Naive thymus-derived CD4-positive, alpha-beta T cell (primary cell): ENCODE measurements at regions of chr20 and their contacts with region 1.

Region 1: GRCh38 chr20:63980806-63981728 is at the start of gene PRPF6:
- DNase-seq: peak; percentile 89 to 95 (median 92)
- ATAC-seq: peak; percentile 85
- H3K4me3 ChIP-seq: peak within 1 kb of the TSS; percentile 78
- H3K4me3 Mint-ChIP-seq: peak within 1 kb of the TSS; percentile 88 to 97 (median 95)
- H3K27ac ChIP-seq: peak within 1 kb of the TSS; percentile 95
- H3K27ac Mint-ChIP-seq: peak within 1 kb of the TSS; percentile 87 to 99 (median 96)
- H3K4me1 ChIP-seq: peaks cover 34 to 47% of the 10 kb centered on the region in 2 donors
- H3K4me1 Mint-ChIP-seq: peaks cover 53 to 77% (median 65%) of the 10 kb centered on the region in 7 donors
- H3K27me3 ChIP-seq: no peaks in the 10 kb centered on the region
- H3K27me3 Mint-ChIP-seq: no peaks in the 10 kb centered on the region
- total RNA-seq, gene PRPF6: 71.2 to 95.8 (median 82.9) TPM

Region 2: GRCh38 chr20:63635431-63636141 is 345.5 kb before region 1 on chr20:
- CTCF ChIA-PET with region 1: no interaction called
- POLR2A ChIA-PET with region 1: interaction called, 9 read pairs
- intact Hi-C with region 1: loop called in 1 of 2 experiments (anchors 5 kb)
- DNase-seq: peak in 8 of 9 donors; percentile 67 to 92 (median 89)
- ATAC-seq: peak; percentile 81
- H3K4me3 ChIP-seq: peak overlapping the region; percentile 50
- H3K4me3 Mint-ChIP-seq: peak overlapping the region; percentile 77 to 89 (median 82)
- H3K27ac ChIP-seq: peak overlapping the region; percentile 78
- H3K27ac Mint-ChIP-seq: peak overlapping the region; percentile 95 to 100 (median 98)
- H3K4me1 ChIP-seq: peaks cover 58 to 73% of the 10 kb centered on the region in 2 donors
- H3K4me1 Mint-ChIP-seq: peaks cover 24 to 78% (median 53%) of the 10 kb centered on the region in 7 donors
- H3K27me3 ChIP-seq: no peaks in the 10 kb centered on the region
- H3K27me3 Mint-ChIP-seq: no peaks in the 10 kb centered on the region

Region 3: GRCh38 chr20:63894358-63895201 is 86.5 kb before region 1 on chr20 and contains the start of gene DNAJC5:
- CTCF ChIA-PET with region 1: no interaction called
- POLR2A ChIA-PET with region 1: interaction called, 4 read pairs
- intact Hi-C with region 1: loop called in 1 of 2 experiments (anchors 1 kb)
- DNase-seq: peak; percentile 96 to 99 (median 98)
- ATAC-seq: peak; percentile 95
- H3K4me3 ChIP-seq: peak within 1 kb of the TSS; percentile 56
- H3K4me3 Mint-ChIP-seq: peak within 1 kb of the TSS; percentile 86 to 99 (median 96)
- H3K27ac ChIP-seq: peak within 1 kb of the TSS; percentile 94
- H3K27ac Mint-ChIP-seq: peak within 1 kb of the TSS; percentile 94 to 98 (median 97)
- H3K4me1 ChIP-seq: peaks cover 21% of the 10 kb centered on the region in 2 donors
- H3K4me1 Mint-ChIP-seq: peaks cover 34 to 49% (median 43%) of the 10 kb centered on the region in 7 donors
- H3K27me3 ChIP-seq: no peaks in the 10 kb centered on the region
- H3K27me3 Mint-ChIP-seq: peaks cover 0 to 2% (median 0%) of the 10 kb centered on the region in 5 donors
- total RNA-seq, gene DNAJC5: 35.5 to 56.8 (median 50.3) TPM

Region 4: DNA sequence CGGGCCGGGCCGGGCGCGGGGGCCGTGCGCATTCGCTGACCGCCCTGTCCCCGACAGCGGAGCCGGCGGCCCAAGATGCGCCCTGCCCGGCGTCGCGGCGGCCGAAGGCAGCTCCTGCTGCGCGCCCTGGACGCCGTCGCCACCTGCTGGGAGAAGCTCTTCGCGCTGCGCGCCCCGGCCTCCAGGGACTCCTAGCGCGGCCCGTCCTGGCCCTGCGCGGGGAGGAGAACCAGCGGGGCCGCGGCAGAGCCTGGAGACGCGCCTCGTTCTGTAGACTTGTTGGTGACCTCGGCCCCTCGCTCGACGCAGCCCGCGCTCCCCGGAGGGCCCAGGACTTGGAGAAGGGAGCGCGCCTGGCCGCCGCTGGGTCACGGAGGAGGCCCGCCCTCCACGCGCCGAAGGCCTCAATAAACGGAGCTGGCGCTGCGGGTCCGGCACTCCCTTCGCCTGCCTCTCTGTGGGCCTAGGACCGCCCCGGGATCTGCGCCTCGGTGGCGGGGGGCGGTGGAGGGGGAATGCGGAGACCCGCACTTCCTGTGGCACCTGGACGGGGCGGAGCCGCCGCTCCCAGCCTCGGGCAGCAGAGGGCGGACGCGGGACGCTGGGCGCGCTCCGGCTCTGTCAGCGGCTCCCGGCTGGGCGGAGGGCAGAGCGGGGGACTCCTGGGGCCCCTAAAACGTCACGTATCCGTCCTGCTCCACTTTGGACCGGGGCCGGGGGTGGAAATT is 57.7 kb after region 1 on chr20:
- CTCF ChIA-PET with region 1: interaction called, 27 read pairs
- POLR2A ChIA-PET with region 1: interaction called, 37 read pairs
- intact Hi-C with region 1: loop called (anchors 1 kb)
- DNase-seq: peak; percentile 55 to 86 (median 76)
- ATAC-seq: peak; percentile 80
- H3K4me3 ChIP-seq: peak overlapping the region; percentile 62
- H3K4me3 Mint-ChIP-seq: peak overlapping the region; percentile 18 to 89 (median 71)
- H3K27ac ChIP-seq: peak overlapping the region; percentile 57
- H3K27ac Mint-ChIP-seq: peak overlapping the region in 4 of 9 donors; percentile 28 to 92 (median 64)
- H3K4me1 ChIP-seq: peaks cover 40 to 49% of the 10 kb centered on the region in 2 donors
- H3K4me1 Mint-ChIP-seq: peaks cover 26 to 49% (median 33%) of the 10 kb centered on the region in 7 donors
- H3K27me3 ChIP-seq: no peaks in the 10 kb centered on the region
- H3K27me3 Mint-ChIP-seq: no peaks in the 10 kb centered on the region

Region 5: GRCh38 chr20:64079273-64080012 is 98.4 kb after region 1 on chr20 and contains the start of gene RGS19:
- CTCF ChIA-PET with region 1: interaction called, 4 read pairs
- POLR2A ChIA-PET with region 1: interaction called, 5 read pairs
- intact Hi-C with region 1: loop called (anchors 1 kb)
- DNase-seq: peak; percentile 59 to 86 (median 65)
- ATAC-seq: peak; percentile 63
- H3K4me3 ChIP-seq: peak within 1 kb of the TSS; percentile 89
- H3K4me3 Mint-ChIP-seq: peak within 1 kb of the TSS; percentile 81 to 98 (median 92)
- H3K27ac ChIP-seq: peak within 1 kb of the TSS; percentile 79
- H3K27ac Mint-ChIP-seq: peak within 1 kb of the TSS; percentile 78 to 94 (median 85)
- H3K4me1 ChIP-seq: peaks cover 22 to 34% of the 10 kb centered on the region in 2 donors
- H3K4me1 Mint-ChIP-seq: peaks cover 21 to 53% (median 39%) of the 10 kb centered on the region in 7 donors
- H3K27me3 ChIP-seq: no peaks in the 10 kb centered on the region
- H3K27me3 Mint-ChIP-seq: peaks cover 0 to 18% (median 0%) of the 10 kb centered on the region in 5 donors
- total RNA-seq, gene RGS19: 21.8 to 93.4 (median 23.6) TPM

Region 6: DNA sequence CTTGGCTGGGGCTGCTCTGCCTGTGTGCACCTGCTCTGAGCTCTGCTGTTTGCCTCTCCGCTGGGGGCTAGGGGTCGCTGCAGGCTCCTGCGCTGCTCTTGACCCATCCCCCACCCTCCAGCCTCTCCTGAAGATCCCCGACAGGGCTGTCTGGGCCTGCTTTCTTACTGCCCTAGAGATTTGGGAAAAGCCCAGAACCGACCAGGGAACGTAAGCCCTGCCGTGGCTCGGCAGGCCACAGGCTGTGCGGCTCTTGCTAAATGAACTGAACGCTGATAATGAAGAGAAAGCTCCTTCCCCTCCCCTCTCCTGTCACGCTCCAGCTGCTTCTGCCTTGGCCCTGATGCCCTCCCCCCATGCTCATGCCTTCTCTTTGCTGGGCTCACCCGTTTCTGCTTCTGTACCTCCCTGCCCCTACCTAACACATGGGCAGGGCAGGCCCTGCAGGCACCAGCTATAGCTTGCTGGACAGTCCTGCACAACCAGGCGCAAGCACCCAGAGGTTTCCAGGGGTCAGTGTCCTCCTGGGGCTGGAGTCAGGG is 242.5 kb after region 1 on chr20:
- CTCF ChIA-PET with region 1: no interaction called
- POLR2A ChIA-PET with region 1: no interaction called
- intact Hi-C with region 1: no loop called
- DNase-seq: no peak
- ATAC-seq: no peak
- H3K4me3 ChIP-seq: no peak overlapping the region
- H3K4me3 Mint-ChIP-seq: no peak overlapping the region
- H3K27ac ChIP-seq: no peak overlapping the region
- H3K27ac Mint-ChIP-seq: no peak overlapping the region
- H3K4me1 ChIP-seq: peaks cover 7 to 16% of the 10 kb centered on the region in 2 donors
- H3K4me1 Mint-ChIP-seq: peaks cover 2 to 22% (median 15%) of the 10 kb centered on the region in 7 donors
- H3K27me3 ChIP-seq: no peaks in the 10 kb centered on the region
- H3K27me3 Mint-ChIP-seq: no peaks in the 10 kb centered on the region